Naive thymus-derived CD4-positive, alpha-beta T cell (primary cell): ENCODE measurements at regions of chr5 and their contacts with region 1.

Region 1: GRCh38 chr5:38994324-38994927 is 79.8 kb downstream of the RICTOR start:
- DNase-seq: peak in 7 of 9 donors; percentile 2 to 57 (median 39)
- ATAC-seq: peak; percentile 63
- H3K4me3 ChIP-seq: no peak overlapping the region
- H3K4me3 Mint-ChIP-seq: no peak overlapping the region
- H3K27ac ChIP-seq: no peak overlapping the region
- H3K27ac Mint-ChIP-seq: peak overlapping the region in 1 of 9 donors; percentile 75
- H3K4me1 ChIP-seq: no peaks in the 10 kb centered on the region
- H3K4me1 Mint-ChIP-seq: peaks cover 4 to 39% (median 25%) of the 10 kb centered on the region in 7 donors
- H3K27me3 ChIP-seq: no peaks in the 10 kb centered on the region
- H3K27me3 Mint-ChIP-seq: no peaks in the 10 kb centered on the region

Region 2: DNA sequence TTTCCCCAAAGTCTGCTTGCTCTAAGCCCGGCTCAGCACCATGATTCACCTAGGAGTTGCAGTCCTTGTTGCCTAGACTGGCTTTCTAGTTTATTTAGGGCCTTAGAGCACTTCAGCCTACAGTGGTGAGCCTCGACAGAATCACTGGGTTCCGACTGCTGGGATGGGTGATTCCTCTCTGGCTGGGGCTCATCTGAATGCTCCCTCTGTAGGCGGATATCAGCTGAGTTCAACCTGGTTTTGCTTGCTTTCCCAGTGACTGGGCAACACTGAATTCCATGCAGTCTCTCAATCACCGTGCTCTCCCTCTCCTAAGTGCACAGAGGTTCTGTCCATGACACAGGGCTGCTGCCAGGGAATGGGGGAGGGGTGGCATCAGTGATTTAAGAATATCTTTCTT is 94.5 kb before region 1 on chr5:
- CTCF ChIA-PET with region 1: no interaction called
- POLR2A ChIA-PET with region 1: no interaction called
- intact Hi-C with region 1: no loop called
- DNase-seq: no peak
- ATAC-seq: no peak
- H3K4me3 ChIP-seq: no peak overlapping the region
- H3K4me3 Mint-ChIP-seq: no peak overlapping the region
- H3K27ac ChIP-seq: no peak overlapping the region
- H3K27ac Mint-ChIP-seq: no peak overlapping the region
- H3K4me1 ChIP-seq: no peaks in the 10 kb centered on the region
- H3K4me1 Mint-ChIP-seq: peaks cover 0 to 2% (median 0%) of the 10 kb centered on the region in 7 donors
- H3K27me3 ChIP-seq: no peaks in the 10 kb centered on the region
- H3K27me3 Mint-ChIP-seq: peaks cover 13 to 32% (median 18%) of the 10 kb centered on the region in 5 donors

Region 3: GRCh38 chr5:39015743-39016586 is 21.5 kb after region 1 on chr5:
- CTCF ChIA-PET with region 1: no interaction called
- POLR2A ChIA-PET with region 1: no interaction called
- intact Hi-C with region 1: no loop called
- DNase-seq: no peak
- ATAC-seq: no peak
- H3K4me3 ChIP-seq: no peak overlapping the region
- H3K4me3 Mint-ChIP-seq: peak overlapping the region in 4 of 10 donors; percentile 13 to 55 (median 26)
- H3K27ac ChIP-seq: no peak overlapping the region
- H3K27ac Mint-ChIP-seq: peak overlapping the region; percentile 6 to 72 (median 42)
- H3K4me1 ChIP-seq: no peaks in the 10 kb centered on the region
- H3K4me1 Mint-ChIP-seq: peaks cover 17 to 52% (median 44%) of the 10 kb centered on the region in 7 donors
- H3K27me3 ChIP-seq: no peaks in the 10 kb centered on the region
- H3K27me3 Mint-ChIP-seq: no peaks in the 10 kb centered on the region

Region 4: DNA sequence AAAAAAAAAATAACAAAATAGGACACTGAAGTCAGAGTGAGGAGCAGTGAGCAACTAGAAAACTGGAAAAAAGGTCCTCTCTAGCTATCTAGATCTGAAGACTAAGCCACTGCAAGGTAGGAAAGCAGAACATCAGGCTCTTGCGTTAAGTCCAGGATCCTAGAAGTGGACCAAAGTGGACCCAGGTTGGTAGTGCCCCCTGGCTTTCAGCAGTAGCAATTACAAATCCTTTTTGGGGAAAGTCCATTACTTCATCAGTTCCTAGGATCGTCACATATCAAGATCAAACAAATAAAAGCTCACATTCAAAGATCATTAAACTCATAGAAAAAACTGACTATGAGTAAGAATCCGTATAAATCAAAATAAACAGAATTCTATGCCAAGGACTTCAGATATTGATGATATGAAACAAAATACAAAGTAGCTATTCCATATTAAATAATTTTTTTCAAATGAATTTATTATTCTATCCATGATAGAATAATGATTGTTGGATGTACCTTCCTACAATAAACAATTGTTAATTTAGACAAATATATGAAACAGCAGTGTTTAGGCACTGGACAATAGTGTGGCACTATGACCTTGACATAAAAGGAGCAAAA is 86.3 kb after region 1 on chr5:
- CTCF ChIA-PET with region 1: interaction called, 5 read pairs
- POLR2A ChIA-PET with region 1: no interaction called
- intact Hi-C with region 1: loop called (anchors 1 to 2 kb)
- DNase-seq: peak in 1 of 9 donors; percentile 28
- ATAC-seq: peak; percentile 81
- H3K4me3 ChIP-seq: no peak overlapping the region
- H3K4me3 Mint-ChIP-seq: no peak overlapping the region
- H3K27ac ChIP-seq: no peak overlapping the region
- H3K27ac Mint-ChIP-seq: no peak overlapping the region
- H3K4me1 ChIP-seq: peaks cover 0 to 5% of the 10 kb centered on the region in 2 donors
- H3K4me1 Mint-ChIP-seq: peaks cover 6 to 19% (median 17%) of the 10 kb centered on the region in 7 donors
- H3K27me3 ChIP-seq: peaks cover 14 to 17% of the 10 kb centered on the region in 2 donors
- H3K27me3 Mint-ChIP-seq: peaks cover 8 to 59% (median 29%) of the 10 kb centered on the region in 5 donors

Region 5: GRCh38 chr5:39106322-39106721 is 111.9 kb after region 1 on chr5:
- CTCF ChIA-PET with region 1: no interaction called
- POLR2A ChIA-PET with region 1: no interaction called
- intact Hi-C with region 1: loop called in 1 of 2 experiments (anchors 1 kb)
- DNase-seq: peak in 3 of 9 donors; percentile 5 to 29 (median 22)
- ATAC-seq: no peak
- H3K4me3 ChIP-seq: no peak overlapping the region
- H3K4me3 Mint-ChIP-seq: no peak overlapping the region
- H3K27ac ChIP-seq: peak overlapping the region; percentile 23
- H3K27ac Mint-ChIP-seq: peak overlapping the region in 7 of 9 donors; percentile 9 to 67 (median 51)
- H3K4me1 ChIP-seq: peaks cover 0 to under 1% of the 10 kb centered on the region in 2 donors
- H3K4me1 Mint-ChIP-seq: peaks cover 4 to 52% (median 28%) of the 10 kb centered on the region in 7 donors
- H3K27me3 ChIP-seq: no peaks in the 10 kb centered on the region
- H3K27me3 Mint-ChIP-seq: no peaks in the 10 kb centered on the region

Region 6: GRCh38 chr5:39547553-39548154 is 553.2 kb after region 1 on chr5:
- CTCF ChIA-PET with region 1: interaction called, 3 read pairs
- POLR2A ChIA-PET with region 1: no interaction called
- intact Hi-C with region 1: loop called in 1 of 2 experiments (anchors 1 kb)
- DNase-seq: peak in 7 of 9 donors; percentile 14 to 49 (median 36)
- ATAC-seq: peak; percentile 50
- H3K4me3 ChIP-seq: no peak overlapping the region
- H3K4me3 Mint-ChIP-seq: peak overlapping the region in 8 of 10 donors; percentile 16 to 67 (median 50)
- H3K27ac ChIP-seq: no peak overlapping the region
- H3K27ac Mint-ChIP-seq: peak overlapping the region in 1 of 9 donors; percentile 55
- H3K4me1 ChIP-seq: no peaks in the 10 kb centered on the region
- H3K4me1 Mint-ChIP-seq: peaks cover 0 to 8% (median 5%) of the 10 kb centered on the region in 7 donors
- H3K27me3 ChIP-seq: no peaks in the 10 kb centered on the region
- H3K27me3 Mint-ChIP-seq: peaks cover 0 to 5% (median 0%) of the 10 kb centered on the region in 5 donors

Region 7: GRCh38 chr5:39570403-39571027 is 576.1 kb after region 1 on chr5:
- CTCF ChIA-PET with region 1: no interaction called
- POLR2A ChIA-PET with region 1: no interaction called
- intact Hi-C with region 1: loop called in 1 of 2 experiments (anchors 1 kb)
- DNase-seq: peak in 5 of 9 donors; percentile 8 to 31 (median 27)
- ATAC-seq: peak; percentile 36
- H3K4me3 ChIP-seq: no peak overlapping the region
- H3K4me3 Mint-ChIP-seq: no peak overlapping the region
- H3K27ac ChIP-seq: no peak overlapping the region
- H3K27ac Mint-ChIP-seq: no peak overlapping the region
- H3K4me1 ChIP-seq: no peaks in the 10 kb centered on the region
- H3K4me1 Mint-ChIP-seq: peaks cover 0 to 3% (median 0%) of the 10 kb centered on the region in 7 donors
- H3K27me3 ChIP-seq: no peaks in the 10 kb centered on the region
- H3K27me3 Mint-ChIP-seq: peaks cover 0 to 29% (median 10%) of the 10 kb centered on the region in 5 donors